ENCODE measurements at regions of chr12 and their contacts with region 1.

Region 1: GRCh38 chr12:120469450-120470149 is at the start of gene SRSF9:
- DNase-seq: peak; percentile 94 to 99 (median 96)
- ATAC-seq: peak; percentile 87
- H3K4me3 ChIP-seq: peak within 1 kb of the TSS; percentile 90
- H3K27ac ChIP-seq: peak within 1 kb of the TSS; percentile 96
- H3K4me1 ChIP-seq: peaks cover 27 to 35% of the 10 kb centered on the region in 2 experiments
- H3K27me3 ChIP-seq: no peaks in the 10 kb centered on the region
- CTCF ChIP-seq: peak; percentile 88 to 94 (median 93)
- EP300 ChIP-seq: no peak
- POLR2A ChIP-seq: peak; percentile 87
- RAD21 ChIP-seq: peak in 1 of 2 experiments; percentile 36; a peak in 3 of 4 replicates
- polyA plus RNA-seq, gene SRSF9: 40.3 to 50.5 TPM

Region 2: GRCh38 chr12:120453977-120454376 is 15.6 kb before region 1 on chr12:
- CTCF ChIA-PET with region 1: no interaction called
- POLR2A ChIA-PET with region 1: interaction called, 23 read pairs
- in situ Hi-C with region 1: no loop called
- intact Hi-C with region 1: no loop called
- DNase-seq: peak; percentile 43 to 48 (median 46)
- ATAC-seq: peak; percentile 86
- H3K4me3 ChIP-seq: no peak overlapping the region
- H3K27ac ChIP-seq: no peak overlapping the region
- H3K4me1 ChIP-seq: no peaks in the 10 kb centered on the region; a peak in 1 of 5 replicates
- H3K27me3 ChIP-seq: no peaks in the 10 kb centered on the region
- CTCF ChIP-seq: peak; percentile 63 to 70 (median 69)
- EP300 ChIP-seq: no peak
- POLR2A ChIP-seq: no peak
- RAD21 ChIP-seq: peak in 1 of 2 experiments; percentile 53; a peak in 2 of 4 replicates

Region 3: DNA sequence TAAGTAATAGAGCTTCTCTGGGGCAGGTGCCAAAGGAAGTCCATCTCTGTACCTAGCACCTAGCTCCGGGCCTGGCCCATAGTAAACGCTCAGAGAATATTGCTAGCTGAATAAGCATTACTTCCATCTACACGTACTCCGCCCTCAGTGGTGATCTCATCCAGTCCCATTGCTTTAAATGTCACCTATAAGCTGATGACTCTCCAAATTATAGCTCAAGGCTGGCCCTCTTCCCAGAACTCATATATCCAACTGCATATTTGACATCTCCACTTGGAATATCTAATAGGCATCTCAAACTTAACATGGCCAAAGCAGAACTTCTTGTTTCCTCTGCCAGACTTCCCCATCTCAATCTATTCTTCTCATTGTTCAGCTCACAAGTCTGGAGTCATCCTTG is 19.4 kb after region 1 on chr12:
- CTCF ChIA-PET with region 1: no interaction called
- POLR2A ChIA-PET with region 1: interaction called, 13 read pairs
- in situ Hi-C with region 1: no loop called
- intact Hi-C with region 1: no loop called
- DNase-seq: peak in 1 of 4 experiments; percentile 19
- ATAC-seq: peak; percentile 40; the same call in 2 of the 3 replicates
- H3K4me3 ChIP-seq: no peak overlapping the region
- H3K27ac ChIP-seq: peak overlapping the region; percentile 15; the same call in 1 of the 3 replicates
- H3K4me1 ChIP-seq: peaks cover 12 to 23% of the 10 kb centered on the region in 2 experiments; a peak in 4 of 5 replicates
- H3K27me3 ChIP-seq: no peaks in the 10 kb centered on the region; a peak in 1 of 5 replicates
- CTCF ChIP-seq: no peak
- EP300 ChIP-seq: no peak
- POLR2A ChIP-seq: no peak
- RAD21 ChIP-seq: no peak

Region 4: GRCh38 chr12:120528861-120529525 is 59.4 kb after region 1 on chr12 and contains the start of gene COQ5:
- CTCF ChIA-PET with region 1: no interaction called
- POLR2A ChIA-PET with region 1: interaction called, 8 read pairs
- in situ Hi-C with region 1: no loop called
- intact Hi-C with region 1: loop called (anchors 2 kb)
- DNase-seq: peak; percentile 76 to 92 (median 80)
- ATAC-seq: peak; percentile 95
- H3K4me3 ChIP-seq: peak within 1 kb of the TSS; percentile 69
- H3K27ac ChIP-seq: peak within 1 kb of the TSS; percentile 95
- H3K4me1 ChIP-seq: peaks cover 4 to 9% of the 10 kb centered on the region in 2 experiments; a peak in 4 of 5 replicates
- H3K27me3 ChIP-seq: no peaks in the 10 kb centered on the region
- CTCF ChIP-seq: no peak
- EP300 ChIP-seq: peak; percentile 64
- POLR2A ChIP-seq: peak; percentile 98
- RAD21 ChIP-seq: no peak
- polyA plus RNA-seq, gene COQ5: 19.2 to 26.2 TPM